ENCODE measurements at regions of chr1 and their contacts with region 1.

Region 1: GRCh38 chr1:209692745-209693504 is 11.7 kb upstream of the HSD11B1 start:
- DNase-seq: peak; percentile 77 to 90 (median 82)
- H3K4me3 ChIP-seq: no peak overlapping the region
- H3K27ac ChIP-seq: no peak overlapping the region
- H3K4me1 ChIP-seq: peaks cover 10 to 31% of the 10 kb centered on the region in 2 donors
- H3K27me3 ChIP-seq: no peaks in the 10 kb centered on the region
- CTCF ChIP-seq: peak; percentile 75 to 96 (median 88)
- POLR2A ChIP-seq: no peak

Region 2: GRCh38 chr1:209576798-209577197 is 116.1 kb before region 1 on chr1:
- intact Hi-C with region 1: loop called (anchors 5 kb)
- DNase-seq: peak; percentile 79 to 93 (median 87)
- H3K4me3 ChIP-seq: no peak overlapping the region
- H3K27ac ChIP-seq: peak overlapping the region in 1 of 5 donors; percentile 46
- H3K4me1 ChIP-seq: peaks cover 0 to 5% of the 10 kb centered on the region in 2 donors
- H3K27me3 ChIP-seq: peaks cover 3% of the 10 kb centered on the region
- CTCF ChIP-seq: peak; percentile 87 to 96 (median 94)
- POLR2A ChIP-seq: no peak

Region 3: DNA sequence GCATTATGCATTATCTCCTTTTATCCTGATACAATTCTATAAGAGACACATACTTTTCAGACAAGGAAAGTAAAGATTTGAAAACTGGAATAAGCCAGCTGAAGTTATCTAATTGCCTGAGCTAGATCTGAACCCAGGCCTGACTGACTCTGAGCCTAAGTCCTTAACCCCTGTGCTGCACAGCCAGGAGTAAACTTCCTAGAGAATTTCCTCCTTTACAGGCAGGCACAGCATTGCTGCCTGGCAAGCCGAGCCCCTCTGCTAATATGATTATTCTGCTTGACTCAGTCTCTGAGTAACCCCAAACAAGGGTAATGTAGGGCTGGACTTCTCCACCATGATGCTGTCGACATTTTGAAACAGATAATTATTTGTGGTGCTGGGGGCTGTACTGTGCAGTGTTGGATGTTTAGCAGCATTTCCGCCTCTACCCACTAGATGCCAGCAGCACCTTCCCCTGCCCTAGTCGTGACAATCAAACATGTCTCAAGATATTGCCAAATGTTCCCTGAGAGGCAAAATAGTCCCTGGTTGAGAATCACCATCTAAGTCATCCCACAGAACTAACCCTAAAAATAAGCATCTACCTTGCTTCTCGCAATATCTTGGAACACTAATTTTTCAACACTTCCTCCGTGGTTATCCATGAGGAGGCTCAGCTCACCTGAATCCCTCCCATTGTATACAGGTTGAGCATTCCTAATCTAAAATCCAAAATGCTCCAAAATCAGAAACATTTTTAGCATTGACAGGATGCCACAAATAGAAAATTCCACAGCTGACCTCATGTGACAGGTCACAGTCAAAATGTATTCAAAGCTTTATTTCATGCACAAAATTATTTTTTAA is 90.9 kb before region 1 on chr1:
- intact Hi-C with region 1: loop called in 1 of 2 experiments (anchors 2 kb)
- DNase-seq: peak; percentile 38 to 83 (median 51)
- H3K4me3 ChIP-seq: no peak overlapping the region
- H3K27ac ChIP-seq: no peak overlapping the region
- H3K4me1 ChIP-seq: no peaks in the 10 kb centered on the region
- H3K27me3 ChIP-seq: no peaks in the 10 kb centered on the region
- CTCF ChIP-seq: peak; percentile 51 to 87 (median 74)
- POLR2A ChIP-seq: no peak

Region 4: DNA sequence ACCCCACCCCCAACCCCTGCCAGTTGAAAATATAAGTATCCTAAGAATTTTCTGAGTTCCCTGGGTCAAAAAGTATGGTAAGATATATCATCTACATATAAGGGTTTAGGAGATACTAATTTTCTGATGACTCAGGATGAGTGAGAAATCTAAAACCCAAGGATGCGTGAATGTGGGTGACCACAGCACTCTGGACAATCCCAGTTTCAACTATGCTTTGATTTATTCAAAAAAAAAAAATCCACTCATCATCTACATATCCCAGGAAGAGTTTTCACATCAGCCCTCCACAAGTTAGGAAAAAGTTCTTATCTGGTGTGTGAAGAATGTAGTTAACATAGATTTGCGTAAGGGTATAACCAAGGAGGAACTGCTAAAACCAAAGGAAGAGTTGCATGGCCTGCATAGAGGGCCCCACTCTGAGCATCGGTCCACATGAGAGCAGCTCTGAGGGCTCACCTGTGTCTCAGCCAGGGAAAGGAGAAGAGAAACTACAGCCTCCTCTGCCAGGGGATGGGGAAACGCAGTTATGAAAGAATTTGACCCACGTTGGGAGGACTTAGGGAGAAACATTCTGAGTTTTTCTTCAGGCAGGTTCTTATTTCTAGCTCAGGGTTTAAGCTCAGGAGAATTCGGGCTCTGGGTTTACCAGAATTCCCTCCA is 59.5 kb before region 1 on chr1:
- intact Hi-C with region 1: loop called (anchors 5 to 10 kb)
- DNase-seq: no peak
- H3K4me3 ChIP-seq: no peak overlapping the region
- H3K27ac ChIP-seq: no peak overlapping the region
- H3K4me1 ChIP-seq: peaks cover 0 to 6% of the 10 kb centered on the region in 2 donors
- H3K27me3 ChIP-seq: no peaks in the 10 kb centered on the region
- CTCF ChIP-seq: no peak
- POLR2A ChIP-seq: no peak

Region 5: GRCh38 chr1:209747580-209748262 is 54.8 kb after region 1 on chr1:
- intact Hi-C with region 1: loop called in 1 of 2 experiments (anchors 10 kb)
- DNase-seq: peak; percentile 94 to 99 (median 99)
- H3K4me3 ChIP-seq: peak overlapping the region in 1 of 4 donors; percentile 21
- H3K27ac ChIP-seq: peak overlapping the region in 2 of 5 donors; percentile 38 to 39
- H3K4me1 ChIP-seq: peaks cover 0 to 5% of the 10 kb centered on the region in 2 donors
- H3K27me3 ChIP-seq: no peaks in the 10 kb centered on the region
- CTCF ChIP-seq: peak; percentile 89 to 100 (median 98)
- POLR2A ChIP-seq: no peak

Measured in adrenal gland (tissue), 19 donors.